CD8-positive, alpha-beta T cell (primary cell): ENCODE measurements at regions of chr22 and their contacts with region 1.

Region 1: DNA sequence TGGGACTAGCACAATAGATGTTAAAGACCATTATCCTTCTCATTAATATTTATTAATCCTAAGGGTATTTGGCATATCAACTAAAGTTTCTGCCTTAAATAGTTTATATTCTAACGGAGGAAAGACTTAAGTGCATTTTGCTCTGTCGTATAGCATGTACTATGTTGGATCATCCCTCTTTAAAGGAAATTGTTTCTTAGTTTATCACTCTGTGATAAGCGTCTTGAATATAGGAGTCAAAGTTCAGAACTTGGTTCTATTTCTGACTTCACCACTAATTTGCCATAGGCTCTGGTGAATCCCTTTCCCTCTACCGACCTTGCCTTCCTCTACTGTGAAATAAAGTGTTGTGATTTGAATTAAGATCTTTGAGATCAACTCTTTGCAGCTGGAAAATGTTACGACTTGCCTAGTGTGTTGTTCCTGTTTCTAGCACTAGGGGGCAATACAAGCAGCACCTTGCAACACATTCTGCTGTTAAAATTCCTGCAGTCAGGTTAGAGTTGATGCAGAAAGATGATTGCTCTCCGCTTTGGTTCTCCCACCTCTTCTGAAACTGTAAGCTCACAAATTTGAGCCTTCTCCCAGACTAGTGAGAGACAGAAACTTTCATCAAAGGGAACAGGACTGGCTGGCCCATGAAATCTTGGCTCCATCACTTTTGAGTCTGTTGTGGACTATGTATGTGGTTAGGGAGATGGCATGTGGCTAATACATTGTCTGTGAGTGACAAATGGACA is 27.8 kb upstream of the ZNRF3 start:
- DNase-seq: peak; percentile 4 to 76 (median 37)
- ATAC-seq: peak; percentile 59
- H3K4me3 ChIP-seq: no peak overlapping the region
- H3K4me3 Mint-ChIP-seq: no peak overlapping the region
- H3K27ac ChIP-seq: no peak overlapping the region
- H3K27ac Mint-ChIP-seq: no peak overlapping the region
- H3K4me1 ChIP-seq: no peaks in the 10 kb centered on the region
- H3K4me1 Mint-ChIP-seq: no peaks in the 10 kb centered on the region
- H3K27me3 ChIP-seq: no peaks in the 10 kb centered on the region
- H3K27me3 Mint-ChIP-seq: peaks cover 9% of the 10 kb centered on the region
- CTCF ChIP-seq: peak; percentile 94

Region 2: DNA sequence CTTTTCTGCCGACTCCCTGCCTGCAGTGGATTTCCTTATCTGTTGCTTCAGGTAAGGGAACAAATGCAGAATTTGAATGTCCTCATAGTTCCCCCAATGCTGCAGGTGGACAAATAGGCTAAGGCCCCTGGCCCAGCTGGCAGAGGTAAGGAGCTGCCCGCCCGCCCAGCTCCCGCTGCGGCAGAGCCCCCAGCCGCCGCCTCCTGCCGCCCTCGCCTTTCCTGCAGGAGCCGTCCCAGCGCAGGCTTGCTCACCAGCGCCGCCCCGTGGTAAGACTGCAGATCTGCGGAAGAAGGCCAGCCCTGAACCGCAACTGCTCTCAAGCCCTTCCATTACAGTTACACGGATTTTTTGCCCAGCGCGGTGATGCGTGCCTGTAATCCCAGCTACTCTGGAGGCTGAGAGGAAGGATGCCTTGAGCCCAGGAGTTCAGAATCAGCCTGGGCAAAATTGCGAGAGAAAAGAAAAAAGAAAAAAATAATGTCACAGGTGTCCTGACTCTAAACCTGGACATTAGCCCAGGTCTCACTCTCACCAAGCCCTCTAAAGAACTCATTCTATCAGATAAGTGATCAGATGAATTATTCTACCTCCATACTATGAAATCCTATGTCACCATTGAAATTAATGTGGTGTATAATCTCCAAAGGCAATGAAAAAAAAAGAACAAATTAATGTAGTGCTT is 299.0 kb after region 1 on chr22:
- CTCF ChIA-PET with region 1: no interaction called
- POLR2A ChIA-PET with region 1: no interaction called
- intact Hi-C with region 1: loop called in 1 of 2 experiments (anchors 5 kb)
- DNase-seq: peak; percentile 28 to 84 (median 59)
- ATAC-seq: peak; percentile 75
- H3K4me3 ChIP-seq: no peak overlapping the region
- H3K4me3 Mint-ChIP-seq: no peak overlapping the region
- H3K27ac ChIP-seq: no peak overlapping the region
- H3K27ac Mint-ChIP-seq: no peak overlapping the region
- H3K4me1 ChIP-seq: peaks cover 8% of the 10 kb centered on the region
- H3K4me1 Mint-ChIP-seq: peaks cover 9% of the 10 kb centered on the region
- H3K27me3 ChIP-seq: peaks cover 0 to 3% of the 10 kb centered on the region in 2 experiments
- H3K27me3 Mint-ChIP-seq: peaks cover 23% of the 10 kb centered on the region
- CTCF ChIP-seq: peak; percentile 89